Activated CD8-positive, alpha-beta T cell treated with anti-CD3 and anti-CD28 coated beads for 36 hours (primary cell): ENCODE measurements at regions of chr9 and their contacts with region 1.

Region 1: GRCh38 chr9:93143830-93144530 is 9.9 kb upstream of the NINJ1 start:
- DNase-seq: peak; percentile 67
- ATAC-seq: peak; percentile 58
- H3K4me3 Mint-ChIP-seq: no peak overlapping the region
- H3K27ac Mint-ChIP-seq: peak overlapping the region; percentile 91
- H3K4me1 Mint-ChIP-seq: peaks cover 65% of the 10 kb centered on the region
- H3K27me3 Mint-ChIP-seq: no peaks in the 10 kb centered on the region
- CTCF ChIP-seq: no peak

Region 2: DNA sequence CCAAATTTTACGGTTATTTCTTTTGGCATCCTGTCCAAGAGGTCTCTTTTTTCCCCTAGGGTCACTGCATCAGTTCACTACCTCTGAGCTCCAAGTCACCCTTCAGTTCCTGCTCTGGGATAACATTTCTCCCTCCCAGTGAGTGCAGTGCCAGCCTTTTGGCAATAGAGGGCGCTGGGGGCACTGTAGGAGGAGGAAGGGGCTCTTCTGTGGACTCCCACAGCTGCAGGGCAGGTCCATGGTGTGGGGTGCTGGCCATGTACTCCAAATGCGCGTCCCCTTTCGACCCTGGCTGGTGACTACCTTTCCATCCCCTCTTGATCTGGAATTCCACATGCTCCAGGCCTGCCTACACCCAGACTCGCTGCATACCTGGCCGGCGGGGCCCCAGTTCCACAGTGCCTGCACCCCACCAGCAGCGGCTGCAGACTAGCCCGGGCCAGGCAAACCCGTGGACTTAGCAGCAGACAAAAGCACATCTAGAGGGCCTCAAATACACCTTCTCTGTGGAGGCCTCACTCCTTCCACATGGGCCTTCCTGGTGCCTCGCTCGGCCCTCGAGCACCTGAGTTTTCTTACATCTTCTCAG is 10.4 kb after region 1 on chr9:
- CTCF ChIA-PET with region 1: interaction called, 11 read pairs
- POLR2A ChIA-PET with region 1: interaction called, 4 read pairs
- intact Hi-C with region 1: no loop called
- DNase-seq: peak; percentile 65
- ATAC-seq: peak; percentile 62
- H3K4me3 Mint-ChIP-seq: no peak overlapping the region
- H3K27ac Mint-ChIP-seq: no peak overlapping the region
- H3K4me1 Mint-ChIP-seq: peaks cover 17% of the 10 kb centered on the region
- H3K27me3 Mint-ChIP-seq: no peaks in the 10 kb centered on the region
- CTCF ChIP-seq: peak; percentile 77

Region 3: DNA sequence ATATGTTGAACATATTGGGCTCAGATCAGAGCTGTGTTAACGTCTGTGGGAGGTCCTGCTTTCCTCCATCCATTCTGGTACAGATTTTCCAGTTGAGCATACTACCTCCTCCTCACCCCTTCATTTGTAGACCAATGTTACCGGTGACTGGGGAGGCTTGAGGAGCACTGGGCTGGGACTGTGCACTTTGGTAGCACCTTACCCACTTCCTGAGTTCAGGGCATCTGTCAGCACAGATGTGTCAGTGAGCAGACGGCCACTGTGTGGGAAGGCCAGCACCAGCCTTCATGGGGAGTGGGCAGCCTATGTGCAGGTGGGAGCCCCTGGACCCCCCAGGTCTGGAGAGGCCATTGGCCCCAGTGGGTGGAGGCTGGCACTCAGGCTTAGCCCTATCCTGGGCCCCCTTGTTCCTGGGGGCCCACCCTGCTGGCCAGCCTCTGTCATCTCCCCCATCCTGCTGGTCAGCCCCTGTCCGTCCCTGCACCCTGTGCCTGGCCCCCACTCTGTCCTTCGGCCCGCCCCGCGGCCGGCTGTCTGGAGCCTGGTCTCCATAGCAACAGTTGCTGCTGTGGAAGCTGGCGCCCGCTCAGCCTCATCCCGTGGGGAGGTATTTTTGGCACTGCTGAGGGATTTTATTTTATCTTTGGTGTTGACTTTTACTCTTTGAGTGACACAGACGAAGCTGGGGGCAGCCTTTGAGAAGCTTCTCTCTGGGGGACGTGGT is 61.2 kb after region 1 on chr9:
- CTCF ChIA-PET with region 1: no interaction called
- POLR2A ChIA-PET with region 1: no interaction called
- intact Hi-C with region 1: no loop called
- DNase-seq: peak; percentile 15
- ATAC-seq: peak; percentile 65
- H3K4me3 Mint-ChIP-seq: no peak overlapping the region
- H3K27ac Mint-ChIP-seq: no peak overlapping the region
- H3K4me1 Mint-ChIP-seq: peaks cover 4% of the 10 kb centered on the region
- H3K27me3 Mint-ChIP-seq: no peaks in the 10 kb centered on the region
- CTCF ChIP-seq: no peak